ENCODE measurements at regions of chr1 and their contacts with region 1.

Region 1: DNA sequence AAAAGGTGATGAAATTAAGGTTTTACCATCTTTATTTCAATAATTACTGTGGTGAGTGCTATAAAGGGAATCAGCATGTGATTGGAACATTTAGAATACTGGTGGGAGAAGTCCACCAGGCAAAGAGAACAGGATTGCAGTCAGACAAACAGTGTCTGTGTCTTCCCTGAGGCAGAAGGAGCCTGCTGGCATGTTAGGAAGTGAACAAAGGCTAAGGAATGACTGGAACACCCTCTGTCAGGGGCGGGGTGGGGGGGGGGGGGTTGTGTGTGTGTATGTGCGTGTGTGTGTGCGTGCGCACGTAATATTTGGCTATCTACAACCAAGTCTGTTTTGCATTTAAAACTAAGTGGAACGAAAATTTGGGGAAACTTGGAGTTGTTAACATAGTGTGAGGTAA is 30.2 kb downstream of the SRRM1 start:
- DNase-seq: no peak
- ATAC-seq: no peak

Region 2: DNA sequence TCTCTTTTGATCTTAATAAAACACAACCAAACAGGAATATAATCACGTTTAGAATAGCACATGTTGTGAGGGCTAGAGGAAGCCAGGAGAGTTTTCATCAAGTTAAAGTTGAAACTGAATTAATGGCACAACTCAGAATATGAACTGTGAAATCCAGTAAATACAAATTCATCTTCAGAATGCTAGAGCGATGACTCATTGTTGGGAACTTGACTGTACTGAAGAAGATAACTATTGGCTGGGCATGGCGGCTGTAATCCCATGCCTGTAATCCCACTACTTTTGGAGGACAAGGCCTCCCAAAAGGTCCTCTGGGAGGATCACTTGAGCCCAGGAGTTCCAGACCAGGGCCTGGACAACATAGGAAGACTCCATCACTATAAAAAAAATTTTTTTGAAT is 550.1 kb after region 1 on chr1:
- intact Hi-C with region 1: loop called (anchors 10 kb)
- DNase-seq: no peak
- ATAC-seq: peak in 1 of 2 donors; percentile 26

Measured in left cardiac atrium (tissue), 4 donors.